MCF 10A (cell line): ENCODE measurements at regions of chr7 and their contacts with region 1.

Region 1: GRCh38 chr7:129343099-129343700 is 91.0 kb upstream of the STRIP2 start:
- DNase-seq: peak; percentile 53
- H3K4me3 Mint-ChIP-seq: no peak overlapping the region
- H3K27ac Mint-ChIP-seq: no peak overlapping the region
- H3K4me1 Mint-ChIP-seq: peaks cover 7% of the 10 kb centered on the region
- H3K27me3 Mint-ChIP-seq: no peaks in the 10 kb centered on the region
- CTCF ChIP-seq: peak; percentile 56

Region 2: DNA sequence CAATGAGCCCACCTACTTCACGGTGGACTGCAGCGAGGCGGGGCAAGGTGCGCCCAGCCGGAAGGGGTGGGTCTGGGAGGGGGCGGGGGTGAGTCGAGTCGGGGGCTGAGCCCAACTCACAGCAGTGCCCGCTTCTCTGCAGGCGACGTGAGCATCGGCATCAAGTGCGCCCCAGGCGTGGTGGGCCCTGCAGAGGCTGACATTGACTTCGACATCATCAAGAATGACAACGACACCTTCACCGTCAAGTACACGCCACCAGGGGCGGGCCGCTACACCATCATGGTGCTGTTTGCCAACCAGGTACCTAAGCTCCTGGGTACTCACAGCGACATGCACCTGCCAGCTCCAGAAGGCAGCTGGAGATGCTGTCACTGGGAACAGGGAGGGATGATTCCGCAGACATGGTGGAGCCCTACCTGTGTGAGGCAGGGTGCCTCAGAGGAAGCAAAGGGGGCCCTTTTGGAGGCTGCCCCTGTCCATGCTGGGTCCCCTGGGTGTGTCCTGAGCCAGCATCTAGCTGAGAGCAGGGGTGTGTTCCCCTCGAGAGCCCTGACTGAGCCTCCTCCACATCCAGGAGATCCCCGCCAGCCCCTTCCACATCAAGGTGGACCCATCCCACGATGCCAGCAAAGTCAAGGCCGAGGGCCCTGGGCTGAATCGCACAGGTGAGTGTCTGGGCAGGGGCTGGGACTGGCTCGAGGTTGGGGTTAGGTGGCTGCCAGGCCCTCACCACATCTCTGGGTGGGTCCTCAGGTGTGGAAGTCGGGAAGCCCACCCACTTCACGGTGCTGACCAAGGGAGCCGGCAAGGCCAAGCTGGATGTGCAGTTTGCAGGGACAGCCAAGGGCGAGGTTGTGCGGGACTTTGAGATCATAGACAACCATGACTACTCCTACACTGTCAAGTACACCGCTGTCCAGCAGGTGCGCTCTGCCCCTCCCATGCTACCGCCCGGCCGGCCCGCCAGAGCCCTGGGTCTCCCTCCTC is 500.3 kb before region 1 on chr7:
- CTCF ChIA-PET with region 1: no interaction called
- POLR2A ChIA-PET with region 1: no interaction called
- intact Hi-C with region 1: no loop called
- DNase-seq: no peak
- H3K4me3 Mint-ChIP-seq: no peak overlapping the region
- H3K27ac Mint-ChIP-seq: no peak overlapping the region
- H3K4me1 Mint-ChIP-seq: no peaks in the 10 kb centered on the region
- H3K27me3 Mint-ChIP-seq: no peaks in the 10 kb centered on the region
- CTCF ChIP-seq: no peak

Region 3: DNA sequence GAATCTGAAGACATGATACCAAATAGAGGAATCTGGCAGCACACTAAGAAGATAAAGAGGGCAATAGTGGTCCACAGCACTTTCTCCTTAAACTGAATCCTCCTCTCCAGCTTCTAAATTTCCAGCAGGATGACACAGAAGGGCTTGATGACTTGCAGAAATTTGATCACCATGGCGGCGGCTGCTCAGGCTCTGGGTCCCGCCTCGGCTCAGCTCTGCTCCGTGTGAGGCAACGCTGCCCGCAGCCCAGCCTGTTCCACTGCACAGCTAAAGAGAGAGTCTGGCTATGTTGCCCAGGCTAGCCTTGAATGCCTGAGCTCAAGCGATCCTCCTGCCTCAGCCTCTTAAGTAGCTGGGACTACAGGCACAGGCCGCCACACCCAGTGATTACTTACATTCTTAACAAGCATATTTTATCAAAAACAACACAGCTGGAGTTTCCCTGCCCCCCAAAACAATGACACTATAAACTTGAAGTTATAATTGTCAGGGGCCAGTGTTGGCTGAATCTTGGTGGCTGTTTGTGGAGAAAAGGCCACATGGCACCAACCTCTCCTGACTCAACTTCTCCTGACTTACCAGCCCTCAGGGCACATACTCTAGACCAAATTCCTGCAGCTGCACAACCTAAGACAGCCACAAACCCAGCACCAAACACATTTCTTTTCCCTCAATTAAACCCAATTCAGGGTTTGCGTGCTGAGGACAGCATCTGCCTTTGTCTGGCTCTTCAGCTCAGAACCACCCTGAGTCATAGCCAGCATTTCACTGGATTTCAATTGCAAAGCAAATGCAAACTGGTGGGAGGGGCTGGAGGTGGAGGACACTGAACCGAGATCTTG is 276.7 kb before region 1 on chr7:
- CTCF ChIA-PET with region 1: no interaction called
- POLR2A ChIA-PET with region 1: no interaction called
- intact Hi-C with region 1: no loop called
- DNase-seq: peak; percentile 33
- H3K4me3 Mint-ChIP-seq: no peak overlapping the region
- H3K27ac Mint-ChIP-seq: peak overlapping the region; percentile 20
- H3K4me1 Mint-ChIP-seq: peaks cover 9% of the 10 kb centered on the region
- H3K27me3 Mint-ChIP-seq: peaks cover 18% of the 10 kb centered on the region
- CTCF ChIP-seq: no peak

Region 4: GRCh38 chr7:129308047-129308446 is 35.2 kb before region 1 on chr7:
- CTCF ChIA-PET with region 1: interaction called, 4 read pairs
- POLR2A ChIA-PET with region 1: interaction called, 19 read pairs
- intact Hi-C with region 1: no loop called
- DNase-seq: peak; percentile 90
- H3K4me3 Mint-ChIP-seq: peak overlapping the region; percentile 22
- H3K27ac Mint-ChIP-seq: peak overlapping the region; percentile 92
- H3K4me1 Mint-ChIP-seq: peaks cover 15% of the 10 kb centered on the region
- H3K27me3 Mint-ChIP-seq: no peaks in the 10 kb centered on the region
- CTCF ChIP-seq: no peak

Region 5: GRCh38 chr7:129332284-129333035 is 10.7 kb before region 1 on chr7:
- CTCF ChIA-PET with region 1: interaction called, 18 read pairs
- POLR2A ChIA-PET with region 1: interaction called, 3 read pairs
- intact Hi-C with region 1: no loop called
- DNase-seq: peak; percentile 21
- H3K4me3 Mint-ChIP-seq: no peak overlapping the region
- H3K27ac Mint-ChIP-seq: no peak overlapping the region
- H3K4me1 Mint-ChIP-seq: peaks cover 7% of the 10 kb centered on the region
- H3K27me3 Mint-ChIP-seq: no peaks in the 10 kb centered on the region
- CTCF ChIP-seq: no peak

Region 6: DNA sequence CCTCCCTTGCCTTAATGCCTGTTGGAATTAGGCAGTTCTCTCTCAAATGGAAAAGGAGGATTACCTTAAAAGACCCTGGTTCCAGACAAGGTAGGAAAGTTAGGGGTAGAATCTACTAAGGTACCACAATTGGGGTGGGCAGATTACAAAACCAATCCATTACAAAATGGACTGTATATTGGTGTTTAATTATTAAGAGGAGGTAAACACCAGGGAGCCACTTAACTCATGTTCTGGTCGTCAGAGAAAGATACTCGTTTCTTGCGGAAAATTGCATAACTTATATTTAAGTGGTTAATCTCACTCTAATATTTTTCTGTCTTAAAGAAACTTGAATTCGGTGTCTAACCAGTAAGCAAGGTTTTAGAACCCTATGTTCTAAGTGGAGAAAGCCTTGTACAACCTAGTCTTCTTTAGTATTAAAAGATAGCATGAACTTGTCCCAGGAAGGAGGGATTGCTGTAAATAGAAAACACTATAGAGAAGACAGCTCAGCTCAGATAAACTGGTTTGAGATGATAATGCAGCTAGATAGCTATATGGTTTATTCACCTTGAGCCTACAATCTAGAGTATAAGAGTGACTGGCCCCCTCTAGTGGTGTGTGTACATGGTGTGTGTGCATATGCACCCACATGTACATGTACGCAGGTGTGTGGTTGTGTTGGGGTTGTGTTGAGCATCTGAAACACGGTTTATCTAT is 33.0 kb after region 1 on chr7:
- CTCF ChIA-PET with region 1: interaction called, 11 read pairs
- POLR2A ChIA-PET with region 1: interaction called, 4 read pairs
- intact Hi-C with region 1: no loop called
- DNase-seq: peak; percentile 64
- H3K4me3 Mint-ChIP-seq: no peak overlapping the region
- H3K27ac Mint-ChIP-seq: no peak overlapping the region
- H3K4me1 Mint-ChIP-seq: no peaks in the 10 kb centered on the region
- H3K27me3 Mint-ChIP-seq: no peaks in the 10 kb centered on the region
- CTCF ChIP-seq: peak; percentile 49

Region 7: GRCh38 chr7:129433847-129434674 is 90.9 kb after region 1 on chr7 and contains the start of gene STRIP2:
- CTCF ChIA-PET with region 1: no interaction called
- POLR2A ChIA-PET with region 1: no interaction called
- intact Hi-C with region 1: loop called (anchors 1 kb)
- DNase-seq: peak; percentile 84
- H3K4me3 Mint-ChIP-seq: peak within 1 kb of the TSS; percentile 96
- H3K27ac Mint-ChIP-seq: peak within 1 kb of the TSS; percentile 29
- H3K4me1 Mint-ChIP-seq: peaks cover 20% of the 10 kb centered on the region
- H3K27me3 Mint-ChIP-seq: no peaks in the 10 kb centered on the region
- CTCF ChIP-seq: peak; percentile 8
- total RNA-seq, gene STRIP2: 6.3 and 18.3 TPM in 2 replicates